ENCODE measurements at regions of chr3 and their contacts with region 1.

Region 1: DNA sequence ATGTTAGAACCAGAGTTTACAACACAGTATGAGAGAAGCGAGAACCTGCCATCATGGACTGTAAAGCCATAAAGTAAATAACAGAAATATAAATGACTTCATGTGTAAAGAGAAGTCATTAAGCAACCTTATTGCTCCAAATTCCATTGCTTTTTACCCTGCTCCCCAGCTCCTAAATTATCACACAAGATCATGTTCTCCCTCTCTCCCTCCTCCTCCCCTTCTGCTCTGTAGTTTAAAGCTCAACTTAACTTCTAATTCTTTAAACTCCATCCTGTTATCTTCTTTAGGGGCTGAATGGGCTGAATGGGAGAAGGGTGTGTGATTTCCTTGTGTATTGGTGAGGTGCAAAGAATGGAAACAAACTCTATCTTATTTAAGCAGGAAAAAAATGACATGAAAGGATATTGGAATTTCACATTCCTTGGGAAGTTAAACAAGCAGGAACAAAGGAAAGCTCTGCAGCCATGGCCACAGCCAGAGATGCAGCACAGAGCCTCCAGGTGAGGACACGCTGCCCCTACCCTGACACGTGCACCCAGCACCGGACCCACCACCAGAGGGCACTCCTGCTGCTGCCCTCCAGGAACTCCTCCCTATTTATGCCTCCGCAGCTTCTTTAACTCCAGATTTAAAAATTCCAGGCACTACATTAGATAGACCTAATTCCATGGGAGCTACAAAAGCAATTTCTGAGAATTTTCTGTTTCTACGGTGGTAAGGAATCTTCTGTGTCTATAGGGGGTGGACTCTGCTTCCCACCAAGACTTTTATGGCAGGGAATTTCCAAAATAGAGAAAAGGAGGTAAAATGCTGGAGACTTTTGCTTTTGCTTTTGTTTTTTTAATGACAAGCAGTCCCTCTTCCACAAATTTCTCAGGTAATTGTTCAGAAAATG is 76.9 kb upstream of the ABI3BP start:
- DNase-seq: peak; percentile 19 to 71
- ATAC-seq: peak; percentile 49 to 60 (median 58)
- H3K4me3 ChIP-seq: no peak overlapping the region
- H3K4me3 Mint-ChIP-seq: no peak overlapping the region
- H3K27ac ChIP-seq: no peak overlapping the region
- H3K27ac Mint-ChIP-seq: no peak overlapping the region
- H3K4me1 ChIP-seq: no peaks in the 10 kb centered on the region
- H3K4me1 Mint-ChIP-seq: no peaks in the 10 kb centered on the region
- H3K27me3 ChIP-seq: no peaks in the 10 kb centered on the region
- H3K27me3 Mint-ChIP-seq: peaks cover 2 to 10% of the 10 kb centered on the region in 2 donors
- CTCF ChIP-seq: peak; percentile 23

Region 2: DNA sequence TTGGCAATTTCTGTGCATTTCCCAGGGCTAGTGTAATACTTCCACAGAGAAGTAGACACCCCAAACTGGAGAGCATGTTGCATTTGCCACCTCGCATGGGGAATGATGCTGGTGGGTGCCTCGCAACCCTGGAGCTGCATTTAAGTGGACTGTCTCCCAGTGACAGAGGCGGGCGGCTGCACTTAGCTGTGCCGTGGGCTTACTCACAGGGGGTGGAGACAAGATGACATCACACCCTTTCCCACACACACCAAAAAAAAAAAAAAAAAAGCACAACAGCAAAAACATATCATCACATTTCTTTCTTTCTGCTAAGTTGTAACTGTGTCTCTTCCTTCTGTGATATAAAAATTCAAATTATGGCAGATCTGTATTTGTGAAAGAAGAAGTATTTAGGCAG is 76.8 kb before region 1 on chr3 and contains the start of gene ABI3BP:
- intact Hi-C with region 1: no loop called
- DNase-seq: no peak
- ATAC-seq: no peak
- H3K4me3 ChIP-seq: no peak within 1 kb of the TSS
- H3K4me3 Mint-ChIP-seq: no peak within 1 kb of the TSS
- H3K27ac ChIP-seq: no peak within 1 kb of the TSS
- H3K27ac Mint-ChIP-seq: no peak within 1 kb of the TSS
- H3K4me1 ChIP-seq: no peaks in the 10 kb centered on the region
- H3K4me1 Mint-ChIP-seq: no peaks in the 10 kb centered on the region
- H3K27me3 ChIP-seq: no peaks in the 10 kb centered on the region
- H3K27me3 Mint-ChIP-seq: peaks cover 2 to 5% of the 10 kb centered on the region in 2 donors
- CTCF ChIP-seq: no peak
- total RNA-seq, gene ABI3BP: not detected

Region 3: DNA sequence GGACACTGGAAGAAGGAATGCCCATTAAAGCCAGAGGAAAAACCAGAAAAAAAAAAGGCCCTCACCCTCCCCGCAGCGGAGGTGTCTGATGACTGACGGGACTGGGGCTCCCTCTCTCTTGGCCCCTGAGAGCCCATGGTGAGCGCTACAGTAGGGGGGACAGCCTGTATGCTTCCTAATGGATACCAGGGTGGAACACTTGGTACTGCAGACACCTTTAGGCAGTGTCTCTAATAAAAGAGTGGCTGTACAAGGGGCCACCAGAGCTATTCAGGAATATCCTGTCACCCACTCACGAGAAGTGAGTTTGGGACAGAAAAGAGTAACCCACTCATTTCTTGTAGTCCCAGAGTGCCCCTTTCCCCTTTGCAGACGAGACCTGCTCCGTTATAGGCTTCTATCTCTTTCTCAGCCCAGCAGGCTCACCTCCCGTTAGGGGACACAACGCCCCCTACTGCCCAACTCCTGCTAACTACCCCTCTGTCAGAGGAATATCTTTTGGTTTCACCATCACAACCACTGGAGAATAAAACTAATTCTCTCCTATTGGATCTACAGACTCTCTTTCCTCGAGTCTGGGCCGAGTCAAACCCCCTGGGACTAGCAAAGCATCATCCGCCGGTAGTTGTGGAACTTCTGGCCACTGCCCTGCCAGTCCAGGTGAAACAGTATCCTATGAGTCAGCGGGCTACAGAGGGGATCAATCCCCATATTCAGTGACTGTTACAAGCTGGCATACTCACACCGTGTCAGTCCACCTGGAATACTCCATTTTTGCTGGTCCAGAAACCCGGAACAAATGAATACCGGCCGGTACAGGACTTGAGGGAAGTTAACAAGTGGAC is 566.0 kb after region 1 on chr3:
- intact Hi-C with region 1: loop called (anchors 10 kb)
- DNase-seq: peak; percentile 60 to 76
- ATAC-seq: peak; percentile 85 to 99 (median 96)
- H3K4me3 ChIP-seq: no peak overlapping the region
- H3K4me3 Mint-ChIP-seq: no peak overlapping the region
- H3K27ac ChIP-seq: no peak overlapping the region
- H3K27ac Mint-ChIP-seq: peak overlapping the region in 1 of 2 donors; percentile 53
- H3K4me1 ChIP-seq: peaks cover 9% of the 10 kb centered on the region
- H3K4me1 Mint-ChIP-seq: no peaks in the 10 kb centered on the region
- H3K27me3 ChIP-seq: no peaks in the 10 kb centered on the region
- H3K27me3 Mint-ChIP-seq: no peaks in the 10 kb centered on the region
- CTCF ChIP-seq: peak; percentile 69

Region 4: DNA sequence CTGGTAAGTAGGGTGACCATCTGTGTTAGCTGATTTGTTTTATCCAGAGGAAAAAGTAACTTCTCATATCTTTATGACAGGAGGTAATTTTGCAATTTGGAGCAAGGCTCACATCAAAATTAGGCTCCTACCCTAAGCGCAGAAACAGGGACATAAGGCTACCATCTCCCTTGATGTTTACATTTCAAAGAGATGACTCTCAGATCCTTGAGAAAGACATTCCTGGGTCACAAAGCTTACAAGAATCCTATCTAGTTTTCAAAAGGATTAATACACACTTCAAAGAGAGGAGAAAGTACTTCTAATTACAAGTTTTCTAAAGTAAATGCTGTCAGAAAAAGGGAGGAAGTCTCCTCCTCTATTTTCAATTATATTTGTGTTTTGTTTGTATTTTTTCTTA is 1371.7 kb after region 1 on chr3:
- intact Hi-C with region 1: no loop called
- DNase-seq: no peak
- ATAC-seq: no peak
- H3K4me3 ChIP-seq: no peak overlapping the region
- H3K4me3 Mint-ChIP-seq: no peak overlapping the region
- H3K27ac ChIP-seq: no peak overlapping the region
- H3K27ac Mint-ChIP-seq: no peak overlapping the region
- H3K4me1 ChIP-seq: no peaks in the 10 kb centered on the region
- H3K4me1 Mint-ChIP-seq: no peaks in the 10 kb centered on the region
- H3K27me3 ChIP-seq: no peaks in the 10 kb centered on the region
- H3K27me3 Mint-ChIP-seq: no peaks in the 10 kb centered on the region
- CTCF ChIP-seq: no peak

Measured in natural killer cell (primary cell).